Endothelial cell of umbilical vein (primary cell): ENCODE measurements at regions of chr12 and their contacts with region 1.

Region 1: DNA sequence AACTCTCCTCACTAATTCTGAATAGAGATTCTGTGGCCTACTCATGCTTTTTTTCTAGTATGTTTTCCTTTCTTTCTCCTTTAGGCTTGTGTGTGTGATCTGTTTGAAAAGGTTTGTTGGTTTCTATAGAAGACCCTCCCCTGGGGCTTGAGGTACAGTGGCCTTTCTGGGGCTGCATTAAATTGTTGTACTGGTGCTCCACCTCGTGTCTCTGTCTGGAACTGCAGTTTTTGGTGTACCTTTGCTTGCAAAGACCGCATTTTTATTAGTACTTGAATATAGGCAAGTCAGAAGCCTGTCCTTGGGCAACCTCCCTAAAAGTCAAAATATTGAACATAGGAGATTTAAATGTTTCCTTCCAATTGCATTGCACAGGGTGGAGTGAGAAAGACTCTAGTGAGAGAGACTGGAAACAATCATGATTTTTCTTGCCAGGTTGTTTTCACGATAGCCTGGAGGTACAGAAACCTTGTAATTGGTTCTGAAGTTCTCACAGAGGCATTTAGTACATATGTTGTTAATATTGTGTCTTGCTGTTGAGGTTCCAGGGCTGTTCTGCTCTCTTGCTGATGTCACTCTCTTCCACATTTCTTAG is 39.0 kb downstream of the SLCO1B1 start:
- DNase-seq: peak; percentile 64
- H3K4me3 ChIP-seq: no peak overlapping the region
- H3K27ac ChIP-seq: no peak overlapping the region
- H3K4me1 ChIP-seq: no peaks in the 10 kb centered on the region
- H3K27me3 ChIP-seq: no peaks in the 10 kb centered on the region
- CTCF ChIP-seq: peak; percentile 61 to 64
- POLR2A ChIP-seq: no peak

Region 2: DNA sequence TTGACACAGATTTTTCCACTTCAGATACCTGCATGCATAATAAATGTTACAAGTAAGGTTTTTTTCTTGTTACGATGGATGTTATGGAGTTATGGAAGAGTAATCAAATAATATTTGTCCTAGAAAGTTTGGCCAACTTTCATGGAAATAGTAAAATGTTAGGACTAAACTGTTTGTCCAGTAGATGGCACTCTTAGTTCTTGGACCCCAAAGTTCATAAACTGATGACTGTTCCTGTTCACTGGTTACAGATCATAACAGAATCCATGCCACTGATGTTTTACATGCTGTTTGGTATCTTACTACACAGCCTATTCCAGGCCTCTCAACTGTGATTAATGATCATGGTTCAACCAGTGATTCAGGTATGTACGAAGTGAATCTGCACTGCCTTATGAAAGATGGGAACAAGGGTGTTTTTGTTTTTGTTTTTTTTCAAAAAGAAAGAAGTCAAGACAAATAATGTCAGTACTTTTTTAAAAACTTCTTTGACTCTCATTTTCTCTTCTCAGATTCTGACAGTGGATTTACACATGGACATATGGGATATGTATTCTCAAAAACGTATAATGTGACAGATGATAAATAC is 523.6 kb before region 1 on chr12:
- CTCF ChIA-PET with region 1: no interaction called
- POLR2A ChIA-PET with region 1: no interaction called
- dilution Hi-C with region 1: no loop called
- intact Hi-C with region 1: loop called (anchors 1 kb)
- DNase-seq: peak; percentile 58
- H3K4me3 ChIP-seq: no peak overlapping the region
- H3K27ac ChIP-seq: no peak overlapping the region
- H3K4me1 ChIP-seq: no peaks in the 10 kb centered on the region
- H3K27me3 ChIP-seq: no peaks in the 10 kb centered on the region
- CTCF ChIP-seq: peak; percentile 48 to 56
- POLR2A ChIP-seq: no peak

Region 3: DNA sequence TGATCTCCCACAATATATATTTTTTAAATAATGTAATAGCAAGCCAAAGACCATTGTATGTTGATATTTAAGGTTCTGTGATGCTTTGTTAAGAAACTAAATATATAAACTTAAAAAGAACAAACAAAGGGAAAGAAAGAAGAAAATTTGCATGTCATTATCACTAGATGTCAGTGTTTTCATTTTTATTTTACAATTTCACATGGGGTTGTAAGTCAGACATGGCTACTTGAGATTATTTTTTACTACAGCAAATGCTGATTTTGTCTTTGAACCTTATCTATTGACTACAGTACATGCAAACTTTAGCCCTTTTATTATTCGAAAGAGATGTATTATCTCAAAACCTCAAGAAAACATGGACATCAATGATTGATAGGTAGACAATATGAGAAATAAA is 438.7 kb before region 1 on chr12:
- CTCF ChIA-PET with region 1: no interaction called
- POLR2A ChIA-PET with region 1: no interaction called
- dilution Hi-C with region 1: no loop called
- intact Hi-C with region 1: loop called (anchors 1 kb)
- DNase-seq: no peak
- H3K4me3 ChIP-seq: no peak overlapping the region
- H3K27ac ChIP-seq: no peak overlapping the region
- H3K4me1 ChIP-seq: no peaks in the 10 kb centered on the region
- H3K27me3 ChIP-seq: no peaks in the 10 kb centered on the region
- CTCF ChIP-seq: no peak
- POLR2A ChIP-seq: no peak

Region 4: GRCh38 chr12:20950248-20950647 is 219.7 kb before region 1 on chr12:
- CTCF ChIA-PET with region 1: interaction called, 5 read pairs
- POLR2A ChIA-PET with region 1: no interaction called
- dilution Hi-C with region 1: no loop called
- intact Hi-C with region 1: loop called (anchors 1 kb)
- DNase-seq: peak; percentile 46
- H3K4me3 ChIP-seq: no peak overlapping the region
- H3K27ac ChIP-seq: no peak overlapping the region
- H3K4me1 ChIP-seq: no peaks in the 10 kb centered on the region
- H3K27me3 ChIP-seq: peaks cover 0 to 2% of the 10 kb centered on the region in 2 experiments
- CTCF ChIP-seq: peak; percentile 37 to 41
- POLR2A ChIP-seq: no peak